ENCODE measurements at regions of chr2 and their contacts with region 1.

Region 1: DNA sequence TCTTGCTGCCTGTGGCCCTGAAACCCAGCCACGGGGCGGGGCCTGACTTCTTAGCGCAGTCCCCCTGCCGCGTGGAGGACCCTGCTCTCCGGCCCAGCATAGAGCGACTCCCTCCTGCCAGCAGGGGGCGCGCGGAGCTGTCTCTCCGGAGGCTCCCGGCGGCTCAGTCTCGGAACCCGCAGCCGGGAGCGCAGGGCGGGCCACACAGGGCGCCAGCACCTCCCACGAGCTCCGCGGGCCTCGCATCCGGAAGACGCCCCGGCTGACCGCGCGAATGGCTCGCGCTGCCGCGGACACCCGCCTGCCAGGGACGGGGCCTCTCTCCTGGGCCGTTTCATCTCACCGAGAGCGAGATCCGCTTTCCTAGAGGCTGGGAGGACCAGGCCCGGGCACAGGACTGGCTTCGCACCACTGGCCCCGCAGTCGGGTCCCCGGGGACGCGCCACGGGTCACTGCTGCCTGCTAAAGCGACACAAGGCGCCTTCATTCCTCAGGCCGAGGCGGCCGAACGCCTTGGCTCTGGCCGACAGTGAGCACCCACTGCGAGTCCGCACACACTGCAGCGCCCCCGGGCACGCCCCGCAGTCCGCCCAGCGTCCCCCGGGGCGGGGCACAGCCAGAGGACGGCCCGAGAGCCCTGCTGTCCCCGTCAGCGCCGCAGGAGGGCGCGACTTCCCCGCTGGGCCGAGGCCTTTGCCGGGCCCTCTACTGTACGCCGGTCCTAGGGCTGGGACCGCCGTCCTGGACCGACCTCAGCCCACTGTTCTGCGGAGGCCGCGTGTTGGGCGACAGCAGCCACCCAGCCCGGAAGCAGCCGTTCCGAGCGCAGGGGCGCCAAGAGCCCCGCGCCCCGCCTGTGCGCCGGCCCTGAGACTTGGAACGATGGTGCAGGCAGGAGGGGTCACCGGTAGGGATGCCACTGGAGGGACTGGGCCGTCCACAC is 39.0 kb upstream of the ARHGEF4 start:
- DNase-seq: peak; percentile 96
- ATAC-seq: peak; percentile 94 to 97

Region 2: GRCh38 chr2:130720036-130720435 is 77.7 kb before region 1 on chr2:
- intact Hi-C with region 1: no loop called
- DNase-seq: no peak
- ATAC-seq: no peak

Region 3: GRCh38 chr2:130744287-130745117 is 53.3 kb before region 1 on chr2:
- intact Hi-C with region 1: no loop called
- DNase-seq: no peak
- ATAC-seq: peak; percentile 97 to 98

Region 4: GRCh38 chr2:130873700-130874346 is 76.1 kb after region 1 on chr2:
- intact Hi-C with region 1: loop called (anchors 2 to 5 kb)
- DNase-seq: peak; percentile 72
- ATAC-seq: peak; percentile 57 to 77

Region 5: GRCh38 chr2:130918393-130918792 is 120.6 kb after region 1 on chr2:
- intact Hi-C with region 1: loop called in 1 of 2 experiments (anchors 2 kb)
- DNase-seq: no peak
- ATAC-seq: no peak

Measured in left cardiac atrium (tissue), 4 donors.